RWPE1 (cell line): ENCODE measurements at regions of chr5 and their contacts with region 1.

Region 1: DNA sequence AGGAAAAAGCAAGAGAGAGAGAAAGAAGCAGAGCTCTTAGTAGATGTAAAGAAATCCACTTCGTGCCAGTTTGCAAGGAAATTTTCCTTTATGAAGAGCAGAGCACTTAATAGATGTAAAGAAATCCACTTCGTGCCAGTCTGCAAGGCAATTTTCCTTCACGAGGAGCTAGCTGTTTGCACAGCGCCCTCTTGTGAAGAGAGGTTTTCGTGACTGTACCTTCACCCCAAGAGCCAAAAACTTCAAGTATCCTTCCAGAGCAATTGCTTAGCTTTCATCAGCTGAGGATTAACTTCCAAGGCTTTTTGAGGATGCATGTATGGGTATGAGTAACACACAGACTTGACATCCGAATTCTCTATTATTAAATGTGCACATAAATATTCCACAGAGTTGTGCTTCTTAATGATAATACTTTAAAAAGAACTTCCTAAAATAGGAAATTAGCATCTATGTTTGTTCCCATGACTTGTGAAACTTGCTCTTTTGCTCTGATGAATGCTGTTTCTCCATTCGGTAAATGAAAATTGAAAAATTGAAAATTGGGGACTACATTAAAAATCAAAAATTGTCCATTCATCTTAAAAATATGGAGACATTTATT is 525.6 kb downstream of the PDE4D start:
- DNase-seq: peak; percentile 44
- H3K27ac ChIP-seq: no peak overlapping the region
- CTCF ChIP-seq: peak; percentile 83

Region 2: GRCh38 chr5:59216841-59217240 is 151.1 kb before region 1 on chr5:
- CTCF ChIA-PET with region 1: interaction called, 10 read pairs
- POLR2A ChIA-PET with region 1: no interaction called
- DNase-seq: no peak
- H3K27ac ChIP-seq: no peak overlapping the region
- CTCF ChIP-seq: no peak

Region 3: DNA sequence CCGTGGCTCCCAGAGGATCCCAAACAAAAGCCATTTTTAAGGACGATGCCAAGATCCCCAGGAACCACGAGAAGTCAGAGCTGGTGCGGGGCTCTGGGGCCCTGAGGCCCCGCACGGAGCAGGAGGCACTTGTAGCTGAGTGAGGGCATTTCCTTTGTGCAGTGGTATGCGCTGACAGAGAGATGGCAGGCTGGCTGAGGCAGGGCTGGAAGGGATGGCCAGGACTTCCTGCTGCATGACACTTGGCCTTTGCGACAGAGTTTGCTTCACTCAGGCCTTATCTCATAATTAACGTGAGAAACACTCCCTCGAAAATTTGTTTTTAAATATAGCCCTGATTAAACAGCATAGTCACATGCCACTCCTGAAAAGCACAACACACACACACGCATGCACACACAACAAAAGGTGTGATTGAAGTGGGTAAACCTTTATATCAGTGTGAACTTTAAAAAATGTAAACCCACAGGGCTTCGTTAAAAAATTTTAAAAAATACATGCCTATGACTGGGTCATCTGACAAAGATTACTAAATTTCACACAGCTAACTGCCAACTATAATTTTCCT is 11.0 kb before region 1 on chr5:
- CTCF ChIA-PET with region 1: interaction called, 14 read pairs
- POLR2A ChIA-PET with region 1: no interaction called
- DNase-seq: no peak
- H3K27ac ChIP-seq: no peak overlapping the region
- CTCF ChIP-seq: no peak

Region 4: DNA sequence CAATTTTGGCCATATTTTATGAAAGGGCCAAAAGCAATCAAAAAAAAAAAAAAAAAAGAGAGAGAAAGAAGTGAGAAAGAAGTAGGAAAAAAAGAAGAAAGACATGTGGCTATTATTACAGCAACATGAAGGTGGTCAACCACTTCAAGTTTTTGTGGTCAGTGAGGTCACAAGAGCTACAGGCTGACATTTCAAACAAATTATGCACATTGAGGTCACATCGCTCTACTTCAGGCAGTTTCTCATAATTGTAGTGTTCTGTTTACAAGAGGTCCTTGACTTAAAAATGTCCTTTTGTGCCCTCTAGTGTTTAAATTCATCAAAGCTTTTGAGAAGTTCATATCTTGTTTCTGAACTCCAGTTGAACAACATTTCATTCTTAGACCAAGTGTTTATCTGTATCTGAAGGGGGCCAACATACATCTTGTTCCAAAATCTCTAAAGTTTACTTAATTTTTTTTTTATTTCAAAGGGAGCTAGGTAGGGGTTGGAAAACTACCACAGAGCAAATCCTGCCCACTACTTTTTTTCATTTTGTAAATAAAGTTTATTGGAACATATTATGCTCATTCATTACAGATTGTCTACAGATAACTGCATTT is 12.6 kb after region 1 on chr5:
- CTCF ChIA-PET with region 1: interaction called, 11 read pairs
- POLR2A ChIA-PET with region 1: no interaction called
- DNase-seq: peak; percentile 42
- H3K27ac ChIP-seq: no peak overlapping the region
- CTCF ChIP-seq: peak; percentile 71

Region 5: DNA sequence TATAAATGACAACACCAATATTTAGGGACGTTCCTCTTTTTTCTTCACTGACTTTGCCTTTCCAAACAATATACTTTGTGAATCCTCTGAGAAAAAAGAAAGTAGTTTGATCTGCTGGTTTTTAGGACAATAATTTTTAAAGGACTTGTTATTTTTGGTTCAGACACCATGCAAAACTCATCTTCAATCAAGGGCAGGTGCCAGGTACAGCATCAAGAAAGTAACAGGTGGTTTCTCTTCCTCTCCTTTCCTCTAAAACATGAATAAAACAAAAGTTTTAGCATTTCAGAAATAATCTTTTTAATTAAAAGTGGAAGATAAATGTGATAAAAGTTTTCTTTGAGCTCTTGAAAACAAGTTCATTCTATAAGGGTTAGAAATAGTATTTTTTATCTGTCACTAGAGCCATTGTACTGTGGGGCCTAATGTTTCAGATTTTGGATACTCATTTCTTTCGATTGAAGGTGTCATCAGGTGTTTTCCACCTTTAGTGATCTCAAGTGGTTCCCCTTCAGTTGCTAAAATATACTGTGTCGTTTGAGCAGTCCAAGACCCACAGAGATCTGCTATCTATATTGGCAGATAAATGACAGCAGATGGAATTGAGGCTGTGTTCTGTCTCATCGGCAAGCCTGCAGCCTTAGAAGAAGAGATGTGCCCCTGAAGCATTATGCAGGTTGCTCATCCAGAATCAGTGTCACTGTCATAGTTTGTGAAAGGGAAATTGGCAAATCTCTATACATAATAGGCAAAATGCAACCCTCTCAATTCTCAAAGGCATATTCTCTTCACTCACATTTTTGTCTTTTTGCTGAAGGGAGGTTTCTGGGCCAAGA is 25.9 kb after region 1 on chr5:
- CTCF ChIA-PET with region 1: no interaction called
- POLR2A ChIA-PET with region 1: no interaction called
- DNase-seq: no peak
- H3K27ac ChIP-seq: no peak overlapping the region
- CTCF ChIP-seq: no peak